ENCODE measurements at regions of chr13 and their contacts with region 1.

Region 1: GRCh38 chr13:49681842-49682435 is 9.3 kb downstream of the EBPL start:
- DNase-seq: no peak
- ATAC-seq: no peak
- H3K4me3 ChIP-seq: no peak overlapping the region
- H3K4me3 Mint-ChIP-seq: no peak overlapping the region
- H3K27ac ChIP-seq: no peak overlapping the region
- H3K27ac Mint-ChIP-seq: peak overlapping the region; percentile 45
- H3K4me1 ChIP-seq: peaks cover 4% of the 10 kb centered on the region
- H3K4me1 Mint-ChIP-seq: peaks cover 44% of the 10 kb centered on the region
- H3K27me3 ChIP-seq: no peaks in the 10 kb centered on the region
- H3K27me3 Mint-ChIP-seq: no peaks in the 10 kb centered on the region
- CTCF ChIP-seq: no peak

Region 2: GRCh38 chr13:49936085-49936940 is 254.4 kb after region 1 on chr13 and contains the start of gene SPRYD7:
- CTCF ChIA-PET with region 1: no interaction called
- POLR2A ChIA-PET with region 1: no interaction called
- intact Hi-C with region 1: loop called in 1 of 2 experiments (anchors 10 kb)
- DNase-seq: peak; percentile 86 to 97 (median 92)
- ATAC-seq: peak; percentile 82
- H3K4me3 ChIP-seq: peak within 1 kb of the TSS; percentile 91
- H3K4me3 Mint-ChIP-seq: peak within 1 kb of the TSS; percentile 98
- H3K27ac ChIP-seq: no peak within 1 kb of the TSS
- H3K27ac Mint-ChIP-seq: peak within 1 kb of the TSS; percentile 83
- H3K4me1 ChIP-seq: peaks cover 18% of the 10 kb centered on the region
- H3K4me1 Mint-ChIP-seq: peaks cover 19% of the 10 kb centered on the region
- H3K27me3 ChIP-seq: no peaks in the 10 kb centered on the region
- H3K27me3 Mint-ChIP-seq: no peaks in the 10 kb centered on the region
- CTCF ChIP-seq: peak; percentile 74
- total RNA-seq, gene SPRYD7: 1.1 to 1.5 TPM

Measured in CD4-positive, alpha-beta T cell (primary cell).